ENCODE measurements at regions of chr7 and their contacts with region 1.

Region 1: GRCh38 chr7:64774204-64774842 is 19.9 kb upstream of the ZNF138 start:
- DNase-seq: no peak
- ATAC-seq: peak; percentile 40; the same call in 1 of the 3 replicates
- H3K4me3 ChIP-seq: no peak overlapping the region
- H3K27ac ChIP-seq: no peak overlapping the region
- H3K4me1 ChIP-seq: no peaks in the 10 kb centered on the region
- H3K27me3 ChIP-seq: no peaks in the 10 kb centered on the region
- CTCF ChIP-seq: no peak
- EP300 ChIP-seq: no peak
- POLR2A ChIP-seq: no peak
- RAD21 ChIP-seq: no peak

Region 2: GRCh38 chr7:64755865-64756264 is 18.5 kb before region 1 on chr7:
- CTCF ChIA-PET with region 1: no interaction called
- POLR2A ChIA-PET with region 1: interaction called, 10 read pairs
- RAD21 ChIA-PET with region 1: no interaction called
- SMC1A ChIA-PET with region 1: no interaction called
- in situ Hi-C with region 1: no loop called
- intact Hi-C with region 1: no loop called
- DNase-seq: no peak
- ATAC-seq: no peak
- H3K4me3 ChIP-seq: no peak overlapping the region
- H3K27ac ChIP-seq: no peak overlapping the region
- H3K4me1 ChIP-seq: no peaks in the 10 kb centered on the region
- H3K27me3 ChIP-seq: no peaks in the 10 kb centered on the region
- CTCF ChIP-seq: no peak
- EP300 ChIP-seq: no peak
- POLR2A ChIP-seq: no peak
- RAD21 ChIP-seq: no peak